Psoas muscle (tissue), 8 donors: ENCODE measurements at regions of chr1 and their contacts with region 1.

Region 1: DNA sequence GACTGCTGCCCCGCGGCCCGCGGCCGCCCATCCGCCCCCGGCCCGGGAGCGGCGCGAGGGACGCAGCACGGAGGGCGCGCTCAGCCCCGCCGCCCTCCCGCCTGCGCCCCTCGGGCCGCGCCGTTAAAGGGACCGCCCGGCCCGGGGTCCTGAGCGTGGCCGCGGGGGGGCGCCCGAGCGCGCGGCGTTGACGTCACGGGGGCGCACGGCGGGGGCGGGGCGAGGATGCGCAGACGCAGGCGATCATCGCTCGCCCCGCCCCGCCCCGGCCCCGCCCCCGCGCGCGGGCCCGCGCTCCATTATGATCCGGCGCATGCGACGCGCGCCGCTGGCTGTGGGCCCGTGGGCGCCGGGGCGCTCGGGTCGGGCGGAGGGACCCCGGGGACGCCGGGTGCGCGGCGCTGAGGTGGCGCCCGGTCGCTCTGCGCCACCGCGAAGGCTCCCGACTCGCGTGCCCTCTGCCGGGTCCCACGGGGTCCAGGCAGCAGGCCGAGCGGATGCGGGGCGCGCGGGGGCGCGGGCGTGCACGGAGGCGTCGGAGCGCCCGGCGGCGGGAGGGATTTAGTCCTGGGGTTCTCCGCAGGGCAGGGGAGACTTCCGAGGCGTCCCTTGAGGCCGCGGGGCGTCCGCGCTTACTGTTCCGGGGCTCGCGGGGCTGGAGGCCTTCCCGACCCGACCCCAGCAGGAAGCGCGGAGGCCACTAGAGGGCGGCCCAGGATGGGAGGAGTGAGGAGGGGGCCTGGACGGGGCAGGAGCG is at the start of gene DVL1:
- DNase-seq: peak; percentile 78 to 88
- ATAC-seq: peak; percentile 22 to 40 (median 32)
- H3K4me3 ChIP-seq: peak within 1 kb of the TSS; percentile 83
- H3K27ac ChIP-seq: peak within 1 kb of the TSS; percentile 97
- H3K4me1 ChIP-seq: peaks cover 46% of the 10 kb centered on the region
- H3K27me3 ChIP-seq: peaks cover 0 to 4% (median 0%) of the 10 kb centered on the region in 3 donors
- CTCF ChIP-seq: peak; percentile 42
- total RNA-seq, gene DVL1: 162 to 215 (median 210) TPM

Region 2: DNA sequence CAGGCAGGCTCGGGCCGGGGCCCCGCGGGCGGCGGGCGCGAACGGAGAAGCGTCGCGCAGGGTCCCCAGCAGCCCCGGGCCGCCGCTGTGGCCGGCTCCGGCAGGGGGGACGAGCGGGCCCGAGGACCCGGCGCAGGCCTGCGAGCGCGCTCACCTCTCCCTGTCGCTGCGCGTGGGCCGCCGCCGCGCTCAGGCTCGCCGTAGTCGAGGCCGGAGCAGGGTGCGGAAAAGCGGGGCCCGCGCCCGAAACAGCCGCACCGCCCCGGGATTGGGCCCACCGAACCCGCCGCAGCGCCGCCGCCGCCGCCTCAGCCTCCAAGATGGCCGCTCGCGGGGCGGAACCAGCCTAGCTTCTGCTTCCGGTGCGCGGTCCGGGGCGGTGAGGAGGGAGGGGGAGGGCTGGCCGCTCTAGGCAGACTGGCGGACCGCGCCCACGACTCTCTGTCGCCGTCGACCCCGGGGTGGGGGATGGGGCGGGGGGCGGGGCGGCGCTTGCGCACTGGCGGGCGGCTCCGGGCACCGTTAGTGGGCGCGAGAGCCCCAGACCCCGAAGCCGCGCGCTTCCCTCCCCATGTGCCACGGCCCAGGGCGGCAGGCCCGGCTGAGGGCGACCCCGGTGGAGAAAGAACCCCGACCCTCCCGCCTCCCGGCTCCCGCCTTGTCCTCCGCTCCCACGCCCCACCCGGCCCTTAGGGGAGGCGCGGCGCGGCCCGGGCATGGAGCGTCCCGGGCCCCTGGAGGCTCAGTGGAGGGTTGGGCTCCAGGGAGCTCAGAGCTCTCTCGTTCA is 75.7 kb before region 1 on chr1 and contains the start of gene UBE2J2:
- intact Hi-C with region 1: loop called in 1 of 2 experiments (anchors 2 kb)
- DNase-seq: peak; percentile 94 to 98
- ATAC-seq: peak; percentile 97 to 98 (median 98)
- H3K4me3 ChIP-seq: peak within 1 kb of the TSS; percentile 71
- H3K27ac ChIP-seq: peak within 1 kb of the TSS; percentile 88
- H3K4me1 ChIP-seq: peaks cover 45% of the 10 kb centered on the region
- H3K27me3 ChIP-seq: no peaks in the 10 kb centered on the region
- CTCF ChIP-seq: no peak
- total RNA-seq, gene UBE2J2: 36.8 to 48.1 (median 42.4) TPM

Region 3: DNA sequence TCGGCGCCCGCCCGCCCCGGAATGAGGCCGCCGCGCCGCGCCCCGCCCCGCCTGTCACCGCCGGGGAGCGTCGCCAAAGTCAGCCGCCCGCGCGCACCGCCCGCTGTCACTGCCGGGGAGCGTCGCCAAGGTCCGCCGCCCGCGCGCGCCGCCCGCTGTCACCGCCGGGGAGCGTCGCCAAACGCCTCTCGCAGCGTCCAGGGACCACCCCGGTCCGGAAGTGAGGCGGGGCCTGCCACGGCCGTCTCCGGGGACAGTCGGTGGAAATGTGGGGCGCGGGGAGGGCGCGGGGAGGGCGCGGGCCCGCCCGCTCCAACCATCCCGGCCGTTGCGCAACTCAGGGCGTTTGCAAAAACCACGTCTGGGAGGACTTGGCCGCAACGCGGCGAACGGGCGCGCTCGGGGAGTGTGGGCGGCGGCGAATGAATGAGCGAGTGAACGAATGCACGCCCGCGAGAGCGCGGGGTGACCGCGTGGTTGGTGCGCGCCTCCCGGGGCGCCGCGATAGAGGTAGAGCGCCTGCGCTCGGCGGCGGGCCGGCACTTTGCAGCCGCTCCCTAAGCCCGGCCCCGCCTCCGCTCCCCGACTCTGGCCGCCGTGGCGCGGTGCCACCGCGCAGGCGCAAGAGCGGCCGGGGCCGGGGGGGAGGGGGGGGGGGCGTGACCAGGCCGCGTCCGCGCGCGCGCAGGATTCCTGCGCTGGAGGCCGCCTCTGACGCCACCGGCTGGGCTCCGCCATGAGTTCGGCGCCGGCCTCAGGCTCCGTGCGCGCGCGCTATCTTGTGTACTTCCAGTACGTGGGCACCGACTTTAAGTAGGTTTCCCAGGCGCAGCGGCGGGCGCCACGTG is 41.3 kb before region 1 on chr1 and contains the starts of genes ACAP3 and PUSL1:
- intact Hi-C with region 1: loop called in 1 of 2 experiments (anchors 5 kb)
- DNase-seq: peak; percentile 95 to 96
- ATAC-seq: peak; percentile 82 to 83 (median 82)
- H3K4me3 ChIP-seq: peak within 1 kb of the TSS; percentile 93
- H3K27ac ChIP-seq: peak within 1 kb of the TSS; percentile 97
- H3K4me1 ChIP-seq: peaks cover 45% of the 10 kb centered on the region
- H3K27me3 ChIP-seq: no peaks in the 10 kb centered on the region
- CTCF ChIP-seq: no peak
- total RNA-seq, gene ACAP3: 20.8 to 32.0 (median 26.3) TPM
- total RNA-seq, gene PUSL1: 3.7 to 7.3 (median 5.8) TPM

Region 4: DNA sequence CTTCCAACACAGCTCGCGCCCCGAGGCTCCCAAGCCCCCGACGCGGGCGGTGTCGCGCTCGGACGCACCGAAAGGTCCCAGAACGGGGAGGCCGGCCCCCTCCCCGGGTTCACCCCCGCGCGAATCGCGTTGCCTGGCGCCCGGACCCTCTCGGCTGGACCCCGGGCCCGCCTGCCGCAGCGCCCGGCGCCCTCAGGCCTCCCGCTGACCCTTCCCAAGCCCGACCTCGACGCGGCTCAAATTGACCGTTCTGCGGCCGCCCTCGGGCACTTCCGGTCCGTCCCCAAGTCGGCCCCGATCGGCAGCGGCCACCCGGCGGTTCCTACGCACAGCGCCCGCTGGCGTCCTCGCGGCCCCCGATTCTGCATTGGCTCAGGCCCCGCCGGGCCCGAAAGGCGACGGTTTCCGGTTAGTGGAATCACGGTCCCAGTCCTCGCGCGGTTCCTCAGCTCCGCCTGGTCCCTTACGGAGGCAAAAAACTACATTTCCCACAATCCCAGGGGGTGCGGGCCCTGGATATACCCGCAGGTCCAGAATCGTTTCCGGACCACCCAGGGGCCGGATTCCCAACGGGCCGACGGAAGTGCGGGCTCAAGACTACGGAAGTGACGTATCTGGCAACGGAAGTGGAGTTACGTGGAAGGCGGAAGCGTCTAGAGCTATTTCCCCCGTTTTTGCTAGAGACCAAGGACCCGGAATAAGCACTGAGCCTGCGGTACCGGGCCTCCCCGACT is 25.7 kb after region 1 on chr1 and contains the start of gene AURKAIP1:
- intact Hi-C with region 1: loop called in 1 of 2 experiments (anchors 2 kb)
- DNase-seq: peak; percentile 97 to 99
- ATAC-seq: peak; percentile 93 to 95 (median 94)
- H3K4me3 ChIP-seq: peak within 1 kb of the TSS; percentile 87
- H3K27ac ChIP-seq: peak within 1 kb of the TSS; percentile 90
- H3K4me1 ChIP-seq: peaks cover 32% of the 10 kb centered on the region
- H3K27me3 ChIP-seq: no peaks in the 10 kb centered on the region
- CTCF ChIP-seq: peak; percentile 29
- total RNA-seq, gene AURKAIP1: 180 to 194 (median 183) TPM

Region 5: GRCh38 chr1:1507305-1507704 is 157.9 kb after region 1 on chr1:
- intact Hi-C with region 1: loop called in 1 of 2 experiments (anchors 1 kb)
- DNase-seq: no peak
- ATAC-seq: no peak
- H3K4me3 ChIP-seq: no peak overlapping the region
- H3K27ac ChIP-seq: no peak overlapping the region
- H3K4me1 ChIP-seq: peaks cover 23% of the 10 kb centered on the region
- H3K27me3 ChIP-seq: no peaks in the 10 kb centered on the region
- CTCF ChIP-seq: no peak